ENCODE measurements at regions of chr7 and their contacts with region 1.

Region 1: DNA sequence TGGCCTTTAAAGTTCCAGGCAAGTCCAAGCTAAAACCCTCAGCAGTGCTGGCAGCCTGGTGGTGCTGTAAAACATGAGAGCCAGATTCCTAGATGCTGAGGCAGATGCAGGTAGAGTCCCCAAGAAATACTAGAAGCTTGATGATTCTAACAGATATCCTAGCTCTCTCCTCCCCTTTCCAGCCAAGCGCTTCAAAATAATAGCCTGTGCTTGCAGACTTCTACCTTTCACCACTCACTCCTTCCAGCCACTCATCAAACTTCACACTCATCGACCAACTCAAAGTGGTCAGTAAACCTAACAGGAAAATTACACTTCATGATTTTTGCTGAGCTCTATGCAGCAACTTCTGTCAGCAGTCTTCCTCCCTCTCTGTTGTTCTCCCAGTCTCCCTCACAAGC is 50.2 kb downstream of the LMBR1 start:
- DNase-seq: peak; percentile 33 to 64 (median 55)
- ATAC-seq: peak; percentile 82
- H3K4me3 ChIP-seq: 0 out of 2 replicates have a peak overlapping the region, but pooled peaks have one; percentile 1
- H3K27ac ChIP-seq: peak overlapping the region; percentile 77
- H3K4me1 ChIP-seq: peaks cover 27 to 38% of the 10 kb centered on the region in 2 experiments
- H3K27me3 ChIP-seq: no peaks in the 10 kb centered on the region
- CTCF ChIP-seq: no peak
- EP300 ChIP-seq: no peak
- POLR2A ChIP-seq: no peak
- RAD21 ChIP-seq: no peak

Region 2: GRCh38 chr7:156854654-156855053 is 11.9 kb after region 1 on chr7:
- CTCF ChIA-PET with region 1: no interaction called
- POLR2A ChIA-PET with region 1: interaction called, 21 read pairs
- in situ Hi-C with region 1: no loop called
- intact Hi-C with region 1: no loop called
- DNase-seq: peak in 1 of 4 experiments; percentile 30
- ATAC-seq: peak; percentile 29; the same call in 2 of the 3 replicates
- H3K4me3 ChIP-seq: no peak overlapping the region
- H3K27ac ChIP-seq: no peak overlapping the region
- H3K4me1 ChIP-seq: peaks cover 4 to 6% of the 10 kb centered on the region in 2 experiments; a peak in 2 of 5 replicates
- H3K27me3 ChIP-seq: no peaks in the 10 kb centered on the region
- CTCF ChIP-seq: no peak
- EP300 ChIP-seq: no peak
- POLR2A ChIP-seq: no peak
- RAD21 ChIP-seq: no peak